AG04450 (cell line): ENCODE measurements at regions of chr1 and their contacts with region 1.

Region 1: GRCh38 chr1:212608209-212608955 is at the start of gene ATF3:
- DNase-seq: peak; percentile 99
- H3K4me3 ChIP-seq: peak within 1 kb of the TSS; percentile 79
- H3K27ac ChIP-seq: peak within 1 kb of the TSS; percentile 96
- H3K27me3 ChIP-seq: peaks cover 42% of the 10 kb centered on the region
- CTCF ChIP-seq: no peak
- polyA plus RNA-seq, gene ATF3: 5.5 TPM in 2 replicates

Region 2: DNA sequence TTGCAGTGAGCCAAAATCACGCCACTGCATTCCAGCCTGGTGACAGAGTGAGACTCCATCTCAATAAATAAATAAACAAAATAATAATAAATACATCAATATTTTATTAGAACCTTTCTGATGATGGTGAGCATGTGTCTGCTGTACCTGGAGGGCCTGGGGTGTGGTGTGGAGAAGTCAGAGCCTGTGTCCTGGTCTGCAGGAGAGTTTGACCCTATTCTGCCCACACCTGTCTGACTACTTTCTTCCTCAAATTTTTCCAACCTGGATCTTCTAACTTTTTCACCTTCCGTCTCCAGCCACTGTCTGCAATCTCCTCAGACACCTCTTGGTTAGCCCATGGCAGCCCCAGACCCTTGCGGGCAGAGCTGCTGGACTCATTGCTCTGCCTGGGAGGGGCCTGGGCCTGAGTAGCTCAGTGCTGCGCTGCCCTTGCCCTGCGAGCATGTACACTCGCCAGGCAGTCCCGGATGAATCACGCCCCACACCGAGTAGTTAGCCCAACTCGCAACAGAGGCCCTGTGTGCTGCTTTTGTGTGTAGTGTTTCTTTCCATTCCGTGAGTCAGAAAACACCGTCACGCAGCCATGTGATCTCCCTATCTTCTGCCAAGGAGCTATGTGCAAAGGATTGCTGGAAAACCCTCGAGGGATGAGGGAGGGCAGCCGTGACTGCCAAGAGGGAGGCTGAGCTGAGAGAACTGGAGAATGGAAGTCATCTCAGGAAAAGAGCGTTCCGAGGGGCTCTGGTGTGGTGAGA is 138.5 kb before region 1 on chr1:
- CTCF ChIA-PET with region 1: no interaction called
- POLR2A ChIA-PET with region 1: interaction called, 15 read pairs
- DNase-seq: peak; percentile 96
- H3K4me3 ChIP-seq: no peak overlapping the region
- H3K27ac ChIP-seq: peak overlapping the region; percentile 91
- H3K27me3 ChIP-seq: peaks cover 4% of the 10 kb centered on the region
- CTCF ChIP-seq: no peak

Region 3: DNA sequence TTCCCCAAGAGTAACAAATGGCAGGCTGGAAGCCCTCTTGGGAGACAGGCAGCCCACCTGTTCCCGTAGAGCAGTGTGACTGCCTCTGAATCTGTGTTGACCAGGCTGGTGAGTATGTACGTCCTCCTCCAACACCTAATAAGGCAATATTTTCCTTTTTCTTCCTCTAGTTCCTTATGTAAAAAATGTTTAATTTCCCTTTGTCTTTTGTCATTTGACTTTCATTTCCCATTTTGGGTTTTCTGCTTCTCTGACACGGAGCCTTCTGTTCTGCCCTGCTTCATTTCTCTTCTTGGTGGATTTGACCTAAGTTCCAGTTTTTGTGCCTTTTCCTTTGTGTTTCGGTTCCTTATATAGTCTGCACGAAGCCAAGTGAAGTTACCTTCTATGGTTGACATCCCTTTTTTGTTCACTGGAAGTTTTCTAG is 65.6 kb before region 1 on chr1:
- CTCF ChIA-PET with region 1: interaction called, 7 read pairs
- POLR2A ChIA-PET with region 1: interaction called, 12 read pairs
- DNase-seq: no peak
- H3K4me3 ChIP-seq: no peak overlapping the region
- H3K27ac ChIP-seq: no peak overlapping the region
- H3K27me3 ChIP-seq: no peaks in the 10 kb centered on the region
- CTCF ChIP-seq: no peak

Region 4: GRCh38 chr1:212558693-212559480 is 49.5 kb before region 1 on chr1:
- CTCF ChIA-PET with region 1: no interaction called
- POLR2A ChIA-PET with region 1: interaction called, 24 read pairs
- DNase-seq: peak; percentile 86
- H3K4me3 ChIP-seq: peak overlapping the region; percentile 65
- H3K27ac ChIP-seq: peak overlapping the region; percentile 75
- H3K27me3 ChIP-seq: no peaks in the 10 kb centered on the region
- CTCF ChIP-seq: no peak

Region 5: GRCh38 chr1:212566522-212567479 is 41.6 kb before region 1 on chr1:
- CTCF ChIA-PET with region 1: no interaction called
- POLR2A ChIA-PET with region 1: interaction called, 23 read pairs
- DNase-seq: peak; percentile 56
- H3K4me3 ChIP-seq: peak overlapping the region; percentile 62
- H3K27ac ChIP-seq: peak overlapping the region; percentile 39
- H3K27me3 ChIP-seq: peaks cover 3% of the 10 kb centered on the region
- CTCF ChIP-seq: no peak

Region 6: DNA sequence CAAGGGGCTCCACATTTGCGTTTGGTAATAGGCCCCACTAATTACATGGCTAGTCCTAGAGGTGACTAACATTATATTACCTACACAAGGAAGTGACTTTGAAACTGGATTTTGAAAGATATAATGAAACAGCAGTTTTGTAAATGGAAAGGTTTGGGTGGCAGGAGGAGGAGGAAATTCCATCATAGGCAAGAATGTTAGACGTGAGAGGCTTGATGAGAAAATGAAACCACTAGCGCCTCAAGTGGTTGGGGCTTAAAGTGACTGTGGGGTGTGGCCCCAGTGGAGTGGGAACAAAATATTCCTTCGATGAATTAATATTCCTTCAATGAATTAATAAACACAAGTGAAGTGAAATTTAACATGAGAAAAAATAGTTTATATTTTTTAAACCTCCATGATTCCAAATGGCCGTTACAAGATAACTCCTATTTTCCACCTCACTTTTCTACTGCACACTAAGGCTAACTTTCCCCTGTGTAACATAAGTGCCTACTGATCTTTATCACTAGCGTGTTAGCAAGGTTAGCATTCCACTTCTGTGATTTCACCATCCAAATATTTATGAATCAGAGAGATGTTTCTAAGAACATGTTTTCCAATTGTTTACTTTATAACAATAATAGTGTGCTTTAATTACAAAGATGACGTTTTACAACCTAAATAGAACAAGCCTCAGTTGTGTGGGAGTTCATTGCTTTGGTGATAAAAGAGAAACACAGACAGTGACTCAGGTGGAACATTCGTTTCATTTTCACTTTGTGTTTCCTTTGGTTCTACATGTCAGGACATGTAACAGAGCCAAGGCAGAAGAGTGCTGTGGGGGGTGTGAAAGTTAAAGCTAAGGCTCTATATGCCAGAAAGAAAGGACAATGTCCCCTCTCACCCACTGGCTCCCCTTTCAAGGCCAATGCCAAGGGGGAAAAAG is 12.3 kb before region 1 on chr1:
- CTCF ChIA-PET with region 1: interaction called, 16 read pairs
- POLR2A ChIA-PET with region 1: interaction called, 33 read pairs
- DNase-seq: peak; percentile 93
- H3K4me3 ChIP-seq: peak overlapping the region; percentile 50
- H3K27ac ChIP-seq: peak overlapping the region; percentile 100
- H3K27me3 ChIP-seq: peaks cover 3% of the 10 kb centered on the region
- CTCF ChIP-seq: peak; percentile 74

Region 7: DNA sequence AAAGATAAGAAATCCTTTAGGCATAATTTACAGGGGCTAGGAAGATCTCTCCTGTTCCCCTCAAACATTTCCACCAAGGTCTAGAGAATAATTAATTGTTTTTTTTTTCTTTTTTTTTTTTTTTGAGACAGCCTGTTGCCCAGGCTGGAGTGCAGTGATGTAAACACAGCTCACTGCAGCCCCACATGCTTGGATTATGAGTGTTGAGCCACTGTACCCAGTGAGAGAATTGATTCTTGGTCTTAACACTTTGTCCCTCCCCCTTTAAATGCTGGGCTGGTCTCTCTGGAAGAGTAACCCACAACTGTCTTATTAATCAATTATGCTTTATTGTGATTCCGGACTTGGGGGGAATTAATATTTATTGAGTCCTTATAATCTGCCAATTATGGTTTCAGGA is 33.6 kb after region 1 on chr1:
- CTCF ChIA-PET with region 1: interaction called, 5 read pairs
- POLR2A ChIA-PET with region 1: interaction called, 10 read pairs
- DNase-seq: no peak
- H3K4me3 ChIP-seq: no peak overlapping the region
- H3K27ac ChIP-seq: no peak overlapping the region
- H3K27me3 ChIP-seq: peaks cover 11% of the 10 kb centered on the region
- CTCF ChIP-seq: no peak

Region 8: DNA sequence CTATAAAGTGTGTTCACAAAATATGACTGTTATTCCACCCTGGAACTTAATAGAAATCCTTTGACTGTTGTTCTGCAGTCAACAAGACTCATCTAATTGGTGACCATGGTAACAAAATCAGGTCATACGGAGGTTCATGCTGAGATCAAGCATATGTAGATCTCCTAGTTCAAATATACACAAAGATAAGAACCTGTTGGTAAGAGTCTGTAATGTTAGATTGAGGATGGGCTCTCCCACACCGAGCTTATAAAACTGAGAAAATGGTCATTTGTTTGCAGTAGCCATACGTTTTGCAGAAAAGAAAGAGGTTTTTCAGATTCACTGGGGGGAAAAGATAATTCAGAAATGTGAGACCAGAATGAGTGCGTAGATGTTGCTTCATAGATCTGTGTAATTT is 910.7 kb after region 1 on chr1:
- CTCF ChIA-PET with region 1: no interaction called
- POLR2A ChIA-PET with region 1: no interaction called
- DNase-seq: no peak
- H3K4me3 ChIP-seq: no peak overlapping the region
- H3K27ac ChIP-seq: no peak overlapping the region
- H3K27me3 ChIP-seq: no peaks in the 10 kb centered on the region
- CTCF ChIP-seq: no peak